ENCODE measurements at regions of chr1 and their contacts with region 1.

Region 1: DNA sequence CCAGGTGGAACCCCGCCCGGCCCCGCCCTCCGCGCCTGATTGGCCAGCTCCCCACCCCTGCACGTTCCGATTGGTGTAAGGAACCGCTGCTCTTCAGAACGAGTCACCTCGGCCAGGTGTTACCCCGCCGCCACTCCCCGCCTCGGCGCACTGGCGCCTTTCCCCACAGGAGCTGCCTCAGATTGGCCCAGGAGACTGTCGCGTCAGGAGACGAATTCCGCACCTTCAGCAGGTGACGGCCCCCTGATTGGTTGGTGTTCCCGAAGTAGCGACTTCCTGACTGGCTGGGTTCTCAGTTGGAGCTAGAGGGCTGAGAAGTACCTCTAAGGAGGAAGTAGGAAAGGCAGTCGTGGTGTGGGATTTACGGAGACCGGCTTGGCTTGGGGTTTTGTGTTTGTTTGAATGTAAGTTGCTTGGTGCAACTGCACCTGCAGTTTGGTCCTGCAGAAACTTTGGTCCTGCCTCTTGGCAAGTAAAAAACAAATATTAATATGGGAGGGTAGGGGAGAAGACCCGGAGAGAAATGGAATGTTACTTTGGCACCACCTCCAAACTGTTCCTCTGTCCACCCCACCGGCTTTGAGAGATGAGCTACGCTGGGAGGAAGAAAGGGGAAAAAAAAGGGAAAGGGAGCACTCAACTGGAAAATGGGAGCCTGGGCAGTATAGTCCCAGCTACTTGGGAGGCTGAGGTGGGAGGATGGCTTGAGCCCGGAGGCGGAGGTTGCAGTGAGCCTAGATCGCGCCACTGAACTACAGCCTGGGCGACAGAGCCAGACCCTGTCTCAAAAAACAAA is 411 bp upstream of the F11R start:
- DNase-seq: peak; percentile 94
- H3K4me3 Mint-ChIP-seq: peak overlapping the region; percentile 92
- H3K27ac Mint-ChIP-seq: peak overlapping the region; percentile 76
- H3K4me1 Mint-ChIP-seq: peaks cover 35% of the 10 kb centered on the region
- H3K27me3 Mint-ChIP-seq: no peaks in the 10 kb centered on the region

Region 2: GRCh38 chr1:161032409-161032808 is 11.0 kb after region 1 on chr1:
- CTCF ChIA-PET with region 1: interaction called, 4 read pairs
- intact Hi-C with region 1: loop called (anchors 1 kb)
- DNase-seq: no peak
- H3K4me3 Mint-ChIP-seq: no peak overlapping the region
- H3K27ac Mint-ChIP-seq: no peak overlapping the region
- H3K4me1 Mint-ChIP-seq: peaks cover 28% of the 10 kb centered on the region
- H3K27me3 Mint-ChIP-seq: no peaks in the 10 kb centered on the region

Region 3: GRCh38 chr1:161038523-161039153 is 17.3 kb after region 1 on chr1 and contains the start of gene TSTD1:
- CTCF ChIA-PET with region 1: interaction called, 11 read pairs
- intact Hi-C with region 1: loop called (anchors 2 kb)
- DNase-seq: peak; percentile 92
- H3K4me3 Mint-ChIP-seq: peak within 1 kb of the TSS; percentile 88
- H3K27ac Mint-ChIP-seq: peak within 1 kb of the TSS; percentile 77
- H3K4me1 Mint-ChIP-seq: peaks cover 36% of the 10 kb centered on the region
- H3K27me3 Mint-ChIP-seq: no peaks in the 10 kb centered on the region
- total RNA-seq, gene TSTD1: 50.3 to 51.5 TPM

Region 4: GRCh38 chr1:161165742-161166668 is 144.6 kb after region 1 on chr1 and contains the start of gene PPOX:
- CTCF ChIA-PET with region 1: no interaction called
- intact Hi-C with region 1: no loop called
- DNase-seq: peak; percentile 97
- H3K4me3 Mint-ChIP-seq: peak within 1 kb of the TSS; percentile 87
- H3K27ac Mint-ChIP-seq: peak within 1 kb of the TSS; percentile 87
- H3K4me1 Mint-ChIP-seq: peaks cover 49% of the 10 kb centered on the region
- H3K27me3 Mint-ChIP-seq: no peaks in the 10 kb centered on the region
- total RNA-seq, gene PPOX: 24.9 to 26.0 TPM

Region 5: GRCh38 chr1:161738627-161739287 is 717.4 kb after region 1 on chr1:
- CTCF ChIA-PET with region 1: no interaction called
- intact Hi-C with region 1: no loop called
- DNase-seq: peak; percentile 67
- H3K4me3 Mint-ChIP-seq: no peak overlapping the region
- H3K27ac Mint-ChIP-seq: no peak overlapping the region
- H3K4me1 Mint-ChIP-seq: peaks cover 19% of the 10 kb centered on the region
- H3K27me3 Mint-ChIP-seq: no peaks in the 10 kb centered on the region